Aorta (tissue), 5 donors: ENCODE measurements at regions of chr4 and their contacts with region 1.

Region 1: DNA sequence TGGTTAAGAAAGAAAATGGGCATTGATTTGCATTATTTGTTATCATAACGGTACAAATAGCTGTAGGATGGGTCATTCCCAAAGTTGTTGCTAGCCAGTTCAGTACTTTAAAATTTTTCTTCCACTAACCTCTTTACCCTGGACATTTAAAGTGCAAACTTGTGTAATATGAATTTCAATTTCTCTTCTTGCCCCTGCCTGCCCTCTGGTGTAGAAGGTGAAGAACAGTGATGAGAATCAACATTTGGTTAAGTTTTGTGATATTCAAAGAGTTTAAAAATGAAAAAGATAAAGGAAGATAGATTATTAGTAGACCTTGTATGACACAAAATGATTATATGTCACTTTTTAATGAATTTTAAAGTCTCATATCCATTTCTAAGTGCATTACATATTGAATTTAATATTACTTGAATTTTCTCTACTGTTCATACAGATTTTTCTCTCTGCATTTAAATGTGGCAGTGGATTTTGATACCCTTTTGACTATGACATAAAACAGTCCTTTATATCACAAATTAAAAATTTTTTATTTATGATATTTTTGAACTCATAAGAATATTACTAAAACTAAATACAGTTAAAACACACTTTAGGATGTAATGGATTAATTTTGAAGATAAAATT is 337.7 kb downstream of the BMPR1B start:
- DNase-seq: no peak
- ATAC-seq: no peak
- H3K4me3 ChIP-seq: no peak overlapping the region
- H3K27ac ChIP-seq: no peak overlapping the region
- H3K4me1 ChIP-seq: no peaks in the 10 kb centered on the region
- H3K27me3 ChIP-seq: no peaks in the 10 kb centered on the region

Region 2: DNA sequence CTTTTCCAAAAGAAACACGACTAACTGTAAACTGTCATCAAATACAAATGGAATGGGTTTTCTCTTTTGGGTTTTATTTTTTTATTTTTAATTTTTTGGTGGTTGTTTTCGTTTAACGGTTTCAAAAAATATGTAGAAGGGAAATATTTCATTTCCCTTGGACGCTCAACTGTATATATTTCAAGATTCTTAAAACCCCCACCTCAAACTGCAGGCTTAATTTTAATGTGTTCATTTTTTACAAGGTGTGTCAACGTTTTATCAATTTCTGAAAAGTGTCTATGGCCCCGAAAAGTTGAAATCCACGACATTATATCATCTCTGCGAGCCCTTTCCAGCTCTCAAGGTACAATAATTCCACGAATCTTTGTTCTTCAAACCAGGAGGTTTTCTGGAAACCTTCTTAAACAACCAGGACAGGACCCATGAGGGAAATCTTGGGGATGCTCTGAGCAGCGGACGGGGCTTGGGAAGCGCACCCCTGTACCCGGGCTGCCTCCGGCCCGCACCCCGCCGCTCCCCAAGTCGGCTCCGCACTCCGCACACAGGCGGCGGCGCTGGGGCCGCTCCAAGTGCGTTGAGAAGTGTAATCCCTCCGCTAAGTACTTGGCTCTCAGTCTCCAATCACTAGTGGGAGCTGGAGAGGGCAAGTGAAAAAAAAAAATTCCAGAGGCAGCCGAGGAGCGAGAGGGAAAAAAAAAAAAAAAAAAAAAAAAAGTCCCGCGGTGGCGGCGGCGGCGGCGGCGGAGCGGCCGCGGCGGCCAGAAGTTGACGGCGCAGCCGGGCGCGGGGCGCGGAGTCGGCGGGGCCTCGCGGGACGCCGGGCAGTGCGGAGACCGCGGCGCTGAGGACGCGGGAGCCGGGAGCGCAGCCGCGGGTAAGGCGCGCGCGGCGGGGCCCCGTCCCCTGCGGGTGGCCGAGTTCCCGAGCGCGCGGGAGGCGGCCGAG is 338.0 kb before region 1 on chr4 and contains the start of gene BMPR1B:
- intact Hi-C with region 1: loop called (anchors 2 to 10 kb)
- DNase-seq: peak in 1 of 2 donors; percentile 83
- ATAC-seq: peak; percentile 74
- H3K4me3 ChIP-seq: peak within 1 kb of the TSS; percentile 12 to 86
- H3K27ac ChIP-seq: peak within 1 kb of the TSS; percentile 80 to 93
- H3K4me1 ChIP-seq: no peaks in the 10 kb centered on the region
- H3K27me3 ChIP-seq: no peaks in the 10 kb centered on the region
- total RNA-seq, gene BMPR1B: 13.9 to 14.6 TPM

Region 3: DNA sequence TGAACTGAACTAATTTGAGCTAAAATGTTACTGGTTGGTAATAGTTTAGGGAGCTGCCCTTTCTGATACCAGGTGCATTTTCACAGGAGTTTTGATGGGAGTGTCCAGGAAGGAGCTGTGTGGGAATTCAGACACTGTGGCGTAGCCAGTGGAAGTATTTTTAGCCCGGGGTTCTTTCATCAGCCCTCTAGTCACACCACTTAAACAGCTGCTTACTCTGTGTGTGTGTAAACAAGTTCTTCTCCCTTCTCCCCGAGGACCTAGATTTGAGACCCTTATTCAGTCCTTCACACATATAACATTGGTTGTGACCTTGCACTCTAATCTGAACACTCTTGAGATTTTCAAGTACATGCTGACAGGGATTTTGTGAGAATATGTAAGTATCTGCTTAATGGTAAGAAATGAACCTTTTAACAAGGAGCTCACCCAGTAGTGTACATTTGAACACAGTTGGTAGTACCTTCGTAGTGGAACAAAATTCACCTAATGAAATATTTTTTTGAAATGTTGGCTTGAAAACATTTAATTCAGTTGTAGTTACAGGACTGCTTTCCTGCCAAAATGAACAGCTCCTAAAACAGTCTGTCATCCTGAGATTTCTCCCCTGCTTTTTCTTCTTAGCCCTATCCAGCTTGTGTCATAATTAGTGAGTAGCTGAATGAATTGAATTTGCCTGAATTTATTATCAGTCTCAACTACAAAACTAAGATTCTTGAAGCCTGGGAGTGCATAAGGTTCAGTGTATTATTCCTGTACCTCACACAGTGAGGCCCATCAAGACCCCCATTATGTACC is 275.9 kb before region 1 on chr4:
- intact Hi-C with region 1: loop called in 1 of 2 experiments (anchors 5 kb)
- DNase-seq: no peak
- ATAC-seq: no peak
- H3K4me3 ChIP-seq: no peak overlapping the region
- H3K27ac ChIP-seq: no peak overlapping the region
- H3K4me1 ChIP-seq: no peaks in the 10 kb centered on the region
- H3K27me3 ChIP-seq: no peaks in the 10 kb centered on the region

Region 4: GRCh38 chr4:94877973-94878372 is 217.5 kb before region 1 on chr4:
- intact Hi-C with region 1: loop called in 1 of 2 experiments (anchors 10 kb)
- DNase-seq: no peak
- ATAC-seq: no peak
- H3K4me3 ChIP-seq: no peak overlapping the region
- H3K27ac ChIP-seq: no peak overlapping the region
- H3K4me1 ChIP-seq: no peaks in the 10 kb centered on the region
- H3K27me3 ChIP-seq: no peaks in the 10 kb centered on the region